Activated T-helper 1 cell treated with anti-CD3 and anti-CD28 coated beads, Interleukin-12 subunit alpha, Interleukin-12 subunit beta, Interleukin-2, Interleukin-4 antibody, amounts not matched to agents 30 ng/mL and 10 ng/mL and 1 ng/mL, durations not matched to agents 14 hours and 24 hours and 36 hours (primary cell): ENCODE measurements at regions of chr2 and their contacts with region 1.

Region 1: DNA sequence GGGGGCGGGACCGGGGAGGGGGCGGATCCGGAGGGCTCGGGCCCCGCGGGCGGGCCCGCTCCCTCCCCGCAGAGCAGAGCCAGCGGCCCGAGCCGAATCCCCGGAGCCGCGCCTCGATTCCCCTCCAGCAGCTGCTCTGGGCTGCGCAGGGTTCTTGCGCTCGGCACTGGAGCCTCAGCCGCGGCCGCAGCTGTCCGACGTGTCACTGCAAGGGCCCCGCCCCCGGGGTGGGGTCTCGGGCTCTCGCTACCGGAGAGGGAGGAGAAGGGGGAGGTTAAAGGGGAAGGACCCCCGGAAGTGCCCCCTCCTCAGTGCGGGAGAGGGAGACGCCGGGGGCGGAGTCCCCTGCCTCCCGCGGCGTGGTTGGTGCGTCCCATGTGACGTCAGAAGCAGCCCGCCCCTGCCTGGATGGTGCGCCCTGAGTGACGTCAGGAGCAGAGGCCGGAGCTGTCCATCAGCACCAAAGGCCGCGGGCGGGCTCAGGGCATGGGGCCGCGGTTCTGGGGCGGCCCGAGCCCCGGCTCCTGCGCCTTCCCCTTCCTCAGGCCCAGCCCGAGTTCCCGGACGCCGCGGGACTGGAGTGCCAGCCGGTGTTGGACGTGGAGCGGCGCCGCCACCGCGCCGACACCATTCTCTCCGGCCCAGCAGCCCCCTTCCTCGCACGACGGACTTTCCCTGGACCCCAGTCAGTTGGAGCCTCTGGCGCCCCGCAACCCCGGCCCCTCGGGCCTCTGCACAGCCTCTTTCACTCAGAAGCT is at the starts of genes CHPF and TMEM198:
- DNase-seq: peak; percentile 94
- H3K4me3 Mint-ChIP-seq: peak within 1 kb of the TSS; percentile 93
- H3K27ac Mint-ChIP-seq: peak within 1 kb of the TSS; percentile 85
- H3K4me1 Mint-ChIP-seq: peaks cover 20% of the 10 kb centered on the region
- H3K27me3 Mint-ChIP-seq: peaks cover 25% of the 10 kb centered on the region
- total RNA-seq, gene CHPF: 41.3 and 43.4 TPM in 2 replicates
- total RNA-seq, gene TMEM198: 2.9 and 3.3 TPM in 2 replicates

Region 2: GRCh38 chr2:218286570-218287459 is 1257.0 kb before region 1 on chr2:
- intact Hi-C with region 1: loop called (anchors 5 kb)
- DNase-seq: peak; percentile 82
- H3K4me3 Mint-ChIP-seq: peak overlapping the region; percentile 94
- H3K27ac Mint-ChIP-seq: peak overlapping the region; percentile 99
- H3K4me1 Mint-ChIP-seq: peaks cover 72% of the 10 kb centered on the region
- H3K27me3 Mint-ChIP-seq: no peaks in the 10 kb centered on the region

Region 3: DNA sequence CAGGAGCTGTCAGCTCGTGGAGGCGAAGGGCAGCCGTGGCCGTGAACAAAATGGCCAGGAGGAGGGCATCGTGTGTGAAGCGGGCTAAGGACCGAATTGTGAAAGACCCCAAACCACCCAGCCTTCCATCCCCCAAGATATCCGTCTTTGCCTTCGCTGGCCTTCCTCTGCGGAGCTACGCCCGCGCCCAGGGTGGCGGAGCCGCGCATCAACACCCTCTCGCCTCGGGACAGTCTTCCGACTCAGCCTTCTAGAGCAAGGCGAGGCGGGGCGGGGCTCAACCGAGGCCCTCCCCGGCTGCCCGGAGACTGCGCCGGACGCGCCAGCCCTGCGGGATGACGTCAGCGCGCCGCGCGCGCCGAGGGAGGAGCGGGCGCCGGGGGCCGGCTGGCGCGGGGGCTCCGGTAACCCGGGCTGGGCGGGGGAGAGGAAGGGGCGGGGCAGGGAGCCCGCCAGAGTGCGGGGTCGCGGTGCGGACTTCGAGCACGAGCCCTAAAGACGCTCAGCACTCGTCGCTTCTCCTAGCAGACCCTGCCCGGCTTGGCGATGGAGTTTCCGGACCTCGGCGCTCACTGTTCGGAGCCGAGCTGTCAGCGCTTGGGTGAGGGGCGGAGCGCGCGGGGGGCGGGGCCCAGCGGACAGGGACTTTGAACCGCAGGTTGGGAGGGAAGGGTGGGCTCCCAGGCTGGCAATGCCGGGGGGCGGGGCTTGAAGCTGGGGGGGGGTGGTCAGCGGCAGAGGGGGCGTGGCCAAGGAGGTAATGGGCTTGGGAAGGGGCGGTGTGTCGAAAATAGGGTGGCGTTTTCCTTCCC is 337.1 kb before region 1 on chr2 and contains the start of gene ZFAND2B:
- intact Hi-C with region 1: loop called (anchors 1 kb)
- DNase-seq: peak; percentile 96
- H3K4me3 Mint-ChIP-seq: peak within 1 kb of the TSS; percentile 92
- H3K27ac Mint-ChIP-seq: peak within 1 kb of the TSS; percentile 99
- H3K4me1 Mint-ChIP-seq: peaks cover 40% of the 10 kb centered on the region
- H3K27me3 Mint-ChIP-seq: no peaks in the 10 kb centered on the region
- total RNA-seq, gene ZFAND2B: 35.0 and 41.3 TPM in 2 replicates

Region 4: DNA sequence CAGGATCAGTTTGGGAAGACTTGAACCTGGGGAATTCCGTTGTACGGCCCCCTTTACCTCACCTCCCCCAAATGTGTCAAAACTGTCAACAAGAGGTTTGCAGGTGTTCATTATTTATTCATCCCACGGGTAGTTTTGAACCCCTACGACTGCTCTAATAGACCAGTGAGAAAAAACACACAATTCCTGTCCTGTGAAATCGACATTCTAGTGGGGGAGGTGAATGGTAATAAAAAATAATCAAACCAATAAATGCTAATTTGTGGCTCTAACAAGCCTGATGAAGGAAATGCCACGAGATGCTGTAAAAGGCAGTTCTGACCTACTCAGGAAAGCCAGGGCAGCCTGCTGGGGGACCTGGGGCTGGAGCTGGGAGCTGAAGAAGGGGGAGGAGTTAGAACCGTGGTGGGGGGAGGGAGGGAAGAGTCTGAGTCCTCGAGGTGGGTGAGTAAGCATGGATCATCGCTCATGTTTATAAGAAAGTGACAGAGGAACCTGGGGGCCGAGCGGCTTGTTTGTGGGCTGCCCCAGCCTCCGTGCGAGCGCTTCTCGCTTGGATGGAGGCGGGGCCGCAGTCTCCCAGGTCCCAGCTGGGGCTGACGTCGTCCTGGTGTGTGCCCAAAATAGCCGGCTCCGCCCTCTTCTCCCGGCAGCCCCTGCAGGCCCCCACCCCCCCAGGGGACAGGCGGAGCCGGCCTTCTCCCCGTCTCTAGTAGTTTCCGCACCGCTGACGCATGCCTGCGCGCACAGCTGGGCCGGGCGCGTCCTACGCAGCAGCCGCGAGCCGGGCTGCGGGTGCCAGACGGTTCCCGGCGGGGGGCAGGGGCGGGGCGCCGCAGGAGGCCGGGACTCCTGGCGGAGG is 264.9 kb before region 1 on chr2 and contains the start of gene DNAJB2:
- intact Hi-C with region 1: loop called (anchors 2 kb)
- DNase-seq: peak; percentile 99
- H3K4me3 Mint-ChIP-seq: peak within 1 kb of the TSS; percentile 94
- H3K27ac Mint-ChIP-seq: peak within 1 kb of the TSS; percentile 99
- H3K4me1 Mint-ChIP-seq: peaks cover 45% of the 10 kb centered on the region
- H3K27me3 Mint-ChIP-seq: peaks cover under 1% of the 10 kb centered on the region
- total RNA-seq, gene DNAJB2: 40.8 and 45.3 TPM in 2 replicates

Region 5: DNA sequence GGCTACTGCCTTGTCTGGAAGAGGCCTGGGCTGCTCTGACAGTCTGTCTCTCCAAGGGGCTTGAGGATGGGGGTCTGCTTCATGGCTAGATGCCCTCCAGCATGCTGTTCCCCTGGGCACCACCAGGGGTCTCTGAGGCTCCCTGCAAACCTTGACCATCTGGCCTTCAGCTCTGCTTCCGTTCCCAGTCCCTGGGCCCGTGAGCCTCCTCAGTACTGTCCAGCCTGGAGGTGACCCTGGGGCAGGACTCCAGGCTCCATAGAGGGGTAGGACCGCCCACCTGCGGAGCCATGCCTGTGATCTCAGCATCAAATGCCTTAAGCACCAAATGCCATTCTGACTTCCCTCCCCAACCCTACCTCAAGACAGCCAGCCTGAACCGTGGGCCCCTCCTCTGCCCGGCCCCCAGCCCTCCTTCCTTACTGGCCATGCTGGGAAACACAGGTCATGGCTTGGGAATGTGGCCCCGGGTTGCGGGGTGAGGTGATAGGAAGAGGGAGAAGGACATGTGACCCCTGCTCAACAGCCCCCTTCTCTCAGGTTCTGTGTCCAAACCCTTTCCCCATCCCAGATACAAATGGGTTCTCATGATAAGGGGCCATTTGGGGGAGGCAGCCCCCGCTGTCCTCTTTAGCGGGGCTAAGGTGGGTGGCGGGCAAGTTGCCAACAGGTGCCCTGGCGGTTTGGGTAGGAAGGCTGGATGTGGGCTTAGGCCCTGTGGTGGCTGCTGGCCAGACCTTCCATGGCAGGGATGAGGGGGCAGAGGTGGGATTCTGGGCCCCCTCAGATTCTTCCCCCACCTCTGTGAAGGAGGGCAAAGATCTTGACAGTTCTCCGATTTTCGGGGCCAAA is 84.1 kb before region 1 on chr2:
- intact Hi-C with region 1: no loop called
- DNase-seq: no peak
- H3K4me3 Mint-ChIP-seq: no peak overlapping the region
- H3K27ac Mint-ChIP-seq: no peak overlapping the region
- H3K4me1 Mint-ChIP-seq: no peaks in the 10 kb centered on the region
- H3K27me3 Mint-ChIP-seq: peaks cover 4% of the 10 kb centered on the region

Region 6: GRCh38 chr2:219560037-219560892 is 16.5 kb after region 1 on chr2:
- intact Hi-C with region 1: loop called (anchors 1 kb)
- DNase-seq: no peak
- H3K4me3 Mint-ChIP-seq: no peak overlapping the region
- H3K27ac Mint-ChIP-seq: no peak overlapping the region
- H3K4me1 Mint-ChIP-seq: no peaks in the 10 kb centered on the region
- H3K27me3 Mint-ChIP-seq: peaks cover 1% of the 10 kb centered on the region

Region 7: GRCh38 chr2:219642465-219643080 is 98.8 kb after region 1 on chr2:
- intact Hi-C with region 1: loop called (anchors 1 kb)
- DNase-seq: peak; percentile 83
- H3K4me3 Mint-ChIP-seq: no peak overlapping the region
- H3K27ac Mint-ChIP-seq: no peak overlapping the region
- H3K4me1 Mint-ChIP-seq: peaks cover 11% of the 10 kb centered on the region
- H3K27me3 Mint-ChIP-seq: peaks cover 11% of the 10 kb centered on the region